ENCODE measurements at regions of chr5 and their contacts with region 1.

Region 1: GRCh38 chr5:140113699-140114263 is at the start of gene PURA:
- DNase-seq: peak; percentile 98
- H3K4me3 Mint-ChIP-seq: peak within 1 kb of the TSS; percentile 88
- H3K27ac Mint-ChIP-seq: peak within 1 kb of the TSS; percentile 87
- H3K4me1 Mint-ChIP-seq: peaks cover 70% of the 10 kb centered on the region
- H3K27me3 Mint-ChIP-seq: no peaks in the 10 kb centered on the region
- CTCF ChIP-seq: peak; percentile 9
- total RNA-seq, gene PURA: 20.1 and 24.6 TPM in 2 replicates

Region 2: DNA sequence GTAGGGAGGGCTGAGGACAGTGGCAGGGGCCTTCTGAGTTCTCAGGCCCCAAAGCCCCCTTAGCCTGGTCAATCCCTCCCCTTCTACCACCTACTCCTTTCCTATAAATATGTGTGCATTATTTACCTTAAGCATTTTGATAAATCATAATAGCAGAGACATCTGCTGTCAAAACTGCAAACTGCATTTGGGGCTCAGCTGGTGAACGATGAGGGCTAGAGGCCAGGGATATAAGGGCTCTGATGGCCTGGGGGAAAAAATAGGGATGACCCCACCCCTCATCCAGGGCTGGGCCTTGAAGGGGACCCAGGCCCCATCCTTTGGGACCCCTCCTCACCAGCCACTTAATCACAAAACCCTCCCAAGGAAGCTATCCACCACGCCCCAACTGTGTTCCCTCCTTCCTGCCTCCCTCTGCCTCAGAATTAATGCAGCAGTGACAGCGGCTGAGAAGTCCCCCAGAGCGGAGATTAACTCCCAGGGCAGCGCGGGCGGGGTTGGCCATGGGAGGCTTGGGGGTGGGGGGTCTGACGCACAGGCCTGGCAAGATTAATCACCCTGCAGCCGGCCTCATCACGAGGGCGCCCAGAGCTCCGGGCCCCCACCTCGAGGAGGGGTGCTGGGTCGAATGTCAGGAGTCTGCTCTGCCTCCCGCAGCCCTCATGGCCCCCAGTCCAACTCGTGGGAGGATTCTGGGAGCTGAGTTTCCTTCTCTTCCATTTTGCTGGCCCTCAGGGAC is 423.5 kb before region 1 on chr5:
- CTCF ChIA-PET with region 1: no interaction called
- POLR2A ChIA-PET with region 1: no interaction called
- intact Hi-C with region 1: no loop called
- DNase-seq: peak; percentile 66
- H3K4me3 Mint-ChIP-seq: no peak overlapping the region
- H3K27ac Mint-ChIP-seq: no peak overlapping the region
- H3K4me1 Mint-ChIP-seq: peaks cover 6% of the 10 kb centered on the region
- H3K27me3 Mint-ChIP-seq: no peaks in the 10 kb centered on the region
- CTCF ChIP-seq: peak; percentile 84

Region 3: DNA sequence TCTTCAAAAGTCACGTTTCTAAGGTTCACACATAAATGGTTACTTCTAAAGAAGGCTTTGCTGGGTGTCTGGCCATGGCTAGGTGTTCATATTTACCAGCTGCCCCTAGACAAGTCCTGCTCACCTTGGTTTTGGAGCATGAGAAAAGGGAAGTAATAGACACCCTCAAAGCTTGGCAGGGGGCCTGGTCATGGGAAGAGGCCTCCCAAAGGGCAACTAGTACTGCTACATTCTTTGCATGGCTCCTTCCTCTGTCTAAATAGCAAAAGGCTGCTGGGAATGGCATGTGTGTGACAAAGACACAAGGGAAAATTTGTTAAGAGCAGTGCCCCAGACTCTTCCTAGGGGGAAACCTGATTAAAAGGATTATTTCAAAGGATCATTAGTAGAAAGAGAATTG is 164.1 kb before region 1 on chr5:
- CTCF ChIA-PET with region 1: no interaction called
- POLR2A ChIA-PET with region 1: no interaction called
- intact Hi-C with region 1: no loop called
- DNase-seq: no peak
- H3K4me3 Mint-ChIP-seq: no peak overlapping the region
- H3K27ac Mint-ChIP-seq: no peak overlapping the region
- H3K4me1 Mint-ChIP-seq: no peaks in the 10 kb centered on the region
- H3K27me3 Mint-ChIP-seq: peaks cover 77% of the 10 kb centered on the region
- CTCF ChIP-seq: no peak

Region 4: GRCh38 chr5:140126315-140127012 is 12.7 kb after region 1 on chr5:
- CTCF ChIA-PET with region 1: interaction called, 10 read pairs
- POLR2A ChIA-PET with region 1: interaction called, 147 read pairs
- intact Hi-C with region 1: no loop called
- DNase-seq: no peak
- H3K4me3 Mint-ChIP-seq: no peak overlapping the region
- H3K27ac Mint-ChIP-seq: no peak overlapping the region
- H3K4me1 Mint-ChIP-seq: peaks cover 14% of the 10 kb centered on the region
- H3K27me3 Mint-ChIP-seq: no peaks in the 10 kb centered on the region
- CTCF ChIP-seq: no peak

Region 5: DNA sequence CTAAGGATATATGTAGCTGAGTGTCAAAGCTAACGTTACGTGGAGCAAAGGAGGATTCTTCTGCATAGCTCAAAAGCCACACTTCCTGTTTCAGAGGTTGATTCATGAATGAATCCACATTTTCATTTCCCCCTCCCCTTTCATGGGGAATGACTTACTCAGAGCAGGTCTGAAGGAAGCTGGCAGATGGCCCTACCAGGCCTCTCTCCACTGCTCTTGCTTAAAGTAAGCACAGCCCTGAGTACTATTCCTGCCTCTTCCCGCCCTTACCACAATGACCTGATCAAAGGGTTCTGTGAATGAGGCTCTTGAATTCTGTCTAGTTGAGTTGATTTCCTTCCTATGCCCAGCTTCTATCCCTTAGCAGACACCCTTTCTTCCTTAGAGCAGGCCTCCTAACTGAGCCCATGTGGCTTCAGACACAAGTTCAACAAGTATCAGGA is 18.2 kb after region 1 on chr5:
- CTCF ChIA-PET with region 1: interaction called, 10 read pairs
- POLR2A ChIA-PET with region 1: interaction called, 49 read pairs
- intact Hi-C with region 1: loop called (anchors 2 kb)
- DNase-seq: peak; percentile 88
- H3K4me3 Mint-ChIP-seq: no peak overlapping the region
- H3K27ac Mint-ChIP-seq: peak overlapping the region; percentile 44
- H3K4me1 Mint-ChIP-seq: peaks cover 12% of the 10 kb centered on the region
- H3K27me3 Mint-ChIP-seq: no peaks in the 10 kb centered on the region
- CTCF ChIP-seq: no peak

Region 6: DNA sequence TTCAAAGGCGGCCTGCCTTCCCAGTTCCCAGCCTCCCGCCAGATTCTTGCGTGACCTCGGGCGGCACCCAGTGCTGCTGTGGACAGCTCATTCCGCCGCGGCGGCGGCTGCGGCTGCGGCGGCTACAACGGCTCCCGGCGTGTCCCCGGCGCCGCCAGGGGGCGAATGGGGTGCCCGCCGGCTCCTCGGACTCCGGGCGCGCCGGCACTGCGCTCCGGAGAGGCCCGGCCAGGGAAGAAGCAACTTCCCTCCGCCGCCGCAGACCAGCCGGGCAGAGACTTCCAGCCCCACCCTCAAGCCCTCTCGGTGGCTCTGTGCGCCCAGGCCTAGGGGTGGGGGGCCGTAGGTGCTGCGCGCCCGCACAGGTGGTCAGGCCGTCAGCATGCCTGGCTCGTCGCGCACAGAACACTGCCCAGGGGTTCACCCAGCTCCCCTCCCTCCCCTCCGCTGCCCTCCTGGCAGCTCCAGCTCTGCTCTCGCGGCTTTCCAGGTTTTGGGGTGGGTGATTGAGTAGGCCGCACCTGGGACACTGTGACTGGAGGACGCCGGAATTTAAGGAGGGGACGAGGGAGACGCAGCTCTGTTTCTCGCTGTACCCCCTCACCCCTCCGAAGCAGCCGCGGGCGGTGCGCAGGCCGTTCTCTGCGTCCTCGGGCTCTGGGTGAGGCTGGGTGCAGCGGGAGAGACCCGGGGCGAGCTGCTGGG is 32.2 kb after region 1 on chr5:
- CTCF ChIA-PET with region 1: interaction called, 89 read pairs
- POLR2A ChIA-PET with region 1: interaction called, 18 read pairs
- intact Hi-C with region 1: loop called (anchors 2 kb)
- DNase-seq: peak; percentile 39
- H3K4me3 Mint-ChIP-seq: no peak overlapping the region
- H3K27ac Mint-ChIP-seq: no peak overlapping the region
- H3K4me1 Mint-ChIP-seq: peaks cover 11% of the 10 kb centered on the region
- H3K27me3 Mint-ChIP-seq: no peaks in the 10 kb centered on the region
- CTCF ChIP-seq: peak; percentile 44

Region 7: GRCh38 chr5:140157032-140157803 is 43.4 kb after region 1 on chr5:
- CTCF ChIA-PET with region 1: interaction called, 10 read pairs
- POLR2A ChIA-PET with region 1: interaction called, 5 read pairs
- intact Hi-C with region 1: no loop called
- DNase-seq: peak; percentile 93
- H3K4me3 Mint-ChIP-seq: peak overlapping the region; percentile 62
- H3K27ac Mint-ChIP-seq: peak overlapping the region; percentile 9
- H3K4me1 Mint-ChIP-seq: peaks cover 9% of the 10 kb centered on the region
- H3K27me3 Mint-ChIP-seq: no peaks in the 10 kb centered on the region
- CTCF ChIP-seq: peak; percentile 97

Region 8: DNA sequence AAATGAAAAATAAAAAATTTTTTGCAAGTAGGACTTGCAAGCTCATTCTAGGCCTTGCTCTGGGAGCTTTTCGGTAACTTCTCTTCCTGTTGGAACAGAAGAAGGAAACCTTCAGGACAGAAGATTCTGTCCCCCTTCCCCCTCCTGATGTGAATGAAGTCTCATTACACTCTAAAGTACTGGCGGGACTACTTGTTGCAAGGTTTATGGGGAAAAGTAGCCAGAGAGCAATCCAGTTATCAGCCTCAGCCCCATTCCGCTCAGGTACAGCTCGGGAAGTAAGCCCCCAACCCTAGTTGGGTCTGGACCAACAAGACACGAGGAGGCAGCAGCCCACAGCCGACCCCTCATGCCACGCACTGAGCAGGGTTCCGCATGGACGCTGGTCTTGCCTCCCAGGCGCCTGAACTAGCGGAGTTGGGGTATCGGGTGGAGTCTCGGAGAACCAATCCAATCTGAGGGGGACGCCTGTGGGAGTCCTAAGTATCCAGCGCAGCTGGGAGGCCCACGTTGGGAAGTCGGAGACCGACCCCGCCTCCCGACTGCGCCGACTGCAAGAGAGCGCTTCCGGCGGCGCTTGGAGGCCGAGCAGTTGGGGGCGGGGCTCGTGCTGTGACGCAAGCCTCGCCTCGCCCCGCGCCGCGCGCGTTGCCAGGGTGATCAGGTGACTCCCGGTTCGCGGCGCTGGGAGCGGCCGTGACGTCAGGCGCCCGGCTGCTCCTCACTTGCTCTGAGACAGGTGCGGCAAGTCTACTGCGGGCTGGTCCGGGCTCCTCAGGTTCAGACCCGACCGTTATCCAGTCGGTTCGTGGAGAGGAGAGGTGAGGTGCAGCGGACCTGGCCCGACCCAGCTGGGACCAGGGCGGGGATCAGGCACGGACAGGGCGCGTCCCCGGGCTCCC is 60.9 kb after region 1 on chr5 and contains the start of gene CYSTM1:
- CTCF ChIA-PET with region 1: interaction called, 3 read pairs
- POLR2A ChIA-PET with region 1: interaction called, 16 read pairs
- intact Hi-C with region 1: no loop called
- DNase-seq: peak; percentile 98
- H3K4me3 Mint-ChIP-seq: peak within 1 kb of the TSS; percentile 89
- H3K27ac Mint-ChIP-seq: peak within 1 kb of the TSS; percentile 98
- H3K4me1 Mint-ChIP-seq: peaks cover 11% of the 10 kb centered on the region
- H3K27me3 Mint-ChIP-seq: no peaks in the 10 kb centered on the region
- CTCF ChIP-seq: no peak
- total RNA-seq, gene CYSTM1: 59.4 and 105 TPM in 2 replicates

Measured in MCF 10A (cell line).